ENCODE measurements at regions of chr17 and their contacts with region 1.

Region 1: GRCh38 chr17:39794249-39794970 is 56.7 kb downstream of the GRB7 start:
- DNase-seq: peak in 10 of 14 experiments; percentile 19 to 80 (median 36)
- ATAC-seq: peak; percentile 74
- H3K4me3 ChIP-seq: no peak overlapping the region
- H3K4me3 Mint-ChIP-seq: peak overlapping the region; percentile 79
- H3K27ac ChIP-seq: peak overlapping the region; percentile 53 to 79
- H3K27ac Mint-ChIP-seq: peak overlapping the region; percentile 84
- H3K4me1 ChIP-seq: peaks cover 65% of the 10 kb centered on the region
- H3K4me1 Mint-ChIP-seq: peaks cover 75% of the 10 kb centered on the region
- H3K27me3 ChIP-seq: no peaks in the 10 kb centered on the region
- H3K27me3 Mint-ChIP-seq: no peaks in the 10 kb centered on the region
- CTCF ChIP-seq: no peak

Region 2: DNA sequence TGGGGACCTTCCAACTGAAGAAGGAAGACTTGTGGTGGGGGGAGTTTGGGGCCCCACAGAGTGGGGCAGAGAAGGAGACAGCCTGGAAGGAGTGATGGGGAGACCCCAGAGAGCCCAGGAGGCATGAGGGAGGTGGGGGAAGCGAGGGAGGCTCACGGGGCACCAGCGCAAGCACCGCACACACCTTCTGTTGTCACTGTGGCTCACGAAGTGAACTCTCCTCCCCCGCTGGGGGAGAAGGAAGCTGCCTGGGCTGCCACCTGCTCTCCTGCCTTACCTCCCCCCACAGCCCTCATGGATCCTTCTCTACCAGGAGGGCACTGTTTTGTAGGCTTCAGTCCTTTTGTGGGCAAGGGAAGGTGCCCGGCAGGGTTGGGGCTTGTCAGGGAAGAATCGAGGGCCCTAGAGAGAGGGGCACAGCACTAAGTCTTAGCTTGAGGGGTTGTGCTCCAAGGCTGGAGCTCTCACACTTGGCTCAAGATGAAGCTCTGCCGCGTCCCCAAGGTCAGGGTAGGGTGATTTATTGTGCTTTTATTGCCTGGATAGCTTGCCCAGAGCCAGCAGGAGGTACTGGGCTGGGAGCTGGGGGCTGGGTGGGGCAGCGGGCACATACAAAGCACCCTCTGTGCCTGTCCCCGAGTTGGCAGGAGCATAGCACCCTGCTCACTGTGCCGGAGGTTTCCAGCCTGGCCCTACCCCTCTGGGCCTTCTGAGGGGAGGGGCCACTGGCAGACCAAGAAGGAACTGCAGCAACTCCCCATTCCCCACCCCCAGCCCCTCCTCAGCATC is 162.1 kb before region 1 on chr17:
- CTCF ChIA-PET with region 1: no interaction called
- POLR2A ChIA-PET with region 1: no interaction called
- intact Hi-C with region 1: no loop called
- DNase-seq: no peak
- ATAC-seq: no peak
- H3K4me3 ChIP-seq: no peak overlapping the region
- H3K4me3 Mint-ChIP-seq: no peak overlapping the region
- H3K27ac ChIP-seq: no peak overlapping the region
- H3K27ac Mint-ChIP-seq: no peak overlapping the region
- H3K4me1 ChIP-seq: peaks cover 36% of the 10 kb centered on the region
- H3K4me1 Mint-ChIP-seq: peaks cover 36% of the 10 kb centered on the region
- H3K27me3 ChIP-seq: peaks cover 9 to 21% of the 10 kb centered on the region in 2 experiments
- H3K27me3 Mint-ChIP-seq: peaks cover 24% of the 10 kb centered on the region
- CTCF ChIP-seq: no peak

Region 3: GRCh38 chr17:39730095-39730921 is 64.1 kb before region 1 on chr17 and contains the start of gene MIEN1:
- CTCF ChIA-PET with region 1: interaction called, 11 read pairs
- POLR2A ChIA-PET with region 1: interaction called, 4 read pairs
- intact Hi-C with region 1: no loop called
- DNase-seq: peak; percentile 86 to 98 (median 94)
- ATAC-seq: peak; percentile 91
- H3K4me3 ChIP-seq: peak within 1 kb of the TSS; percentile 79
- H3K4me3 Mint-ChIP-seq: peak within 1 kb of the TSS; percentile 91
- H3K27ac ChIP-seq: peak within 1 kb of the TSS; percentile 90 to 91
- H3K27ac Mint-ChIP-seq: peak within 1 kb of the TSS; percentile 88
- H3K4me1 ChIP-seq: peaks cover 23% of the 10 kb centered on the region
- H3K4me1 Mint-ChIP-seq: peaks cover 17% of the 10 kb centered on the region
- H3K27me3 ChIP-seq: no peaks in the 10 kb centered on the region
- H3K27me3 Mint-ChIP-seq: no peaks in the 10 kb centered on the region
- CTCF ChIP-seq: peak; percentile 91
- total RNA-seq, gene MIEN1: 31.5 to 32.3 TPM

Region 4: DNA sequence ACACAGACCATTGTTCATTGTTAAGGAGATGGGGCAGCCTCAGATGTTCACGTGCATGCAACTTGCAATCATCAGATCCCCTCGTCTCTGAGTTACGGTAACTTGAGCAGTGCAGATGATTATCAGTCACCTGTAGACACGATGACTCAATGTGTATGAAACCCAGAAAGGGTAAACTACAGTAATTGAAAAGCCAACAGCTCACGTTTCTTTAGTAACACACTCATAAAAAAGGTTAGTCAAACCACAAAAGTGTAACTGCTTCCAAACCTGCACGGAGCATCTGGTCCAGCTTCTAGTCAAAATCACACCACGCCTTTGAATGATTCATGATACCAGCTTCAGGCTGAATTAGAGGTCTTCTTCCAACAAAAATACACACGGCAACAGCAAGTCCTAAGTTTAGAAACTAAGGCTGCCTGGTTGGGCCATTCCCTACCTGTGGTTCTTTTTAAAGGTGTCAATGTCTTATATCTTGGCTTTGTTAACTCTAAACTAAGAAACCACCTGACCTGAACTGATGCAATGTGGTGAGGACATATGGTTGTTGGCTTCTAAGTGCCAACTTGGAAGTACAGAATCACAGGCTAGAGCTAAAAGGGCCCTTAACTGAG is 24.3 kb before region 1 on chr17:
- CTCF ChIA-PET with region 1: interaction called, 3 read pairs
- POLR2A ChIA-PET with region 1: interaction called, 32 read pairs
- intact Hi-C with region 1: loop called in 1 of 2 experiments (anchors 2 kb)
- DNase-seq: peak; percentile 23 to 87 (median 55)
- ATAC-seq: peak; percentile 83
- H3K4me3 ChIP-seq: peak overlapping the region; percentile 6
- H3K4me3 Mint-ChIP-seq: peak overlapping the region; percentile 8
- H3K27ac ChIP-seq: peak overlapping the region; percentile 66 to 87
- H3K27ac Mint-ChIP-seq: peak overlapping the region; percentile 84
- H3K4me1 ChIP-seq: peaks cover 82% of the 10 kb centered on the region
- H3K4me1 Mint-ChIP-seq: peaks cover 100% of the 10 kb centered on the region
- H3K27me3 ChIP-seq: no peaks in the 10 kb centered on the region
- H3K27me3 Mint-ChIP-seq: no peaks in the 10 kb centered on the region
- CTCF ChIP-seq: no peak

Region 5: GRCh38 chr17:39777534-39778365 is 16.7 kb before region 1 on chr17:
- CTCF ChIA-PET with region 1: interaction called, 4 read pairs
- POLR2A ChIA-PET with region 1: interaction called, 38 read pairs
- intact Hi-C with region 1: loop called in 1 of 2 experiments (anchors 2 kb)
- DNase-seq: peak in 4 of 14 experiments; percentile 42 to 67 (median 66)
- ATAC-seq: peak; percentile 58
- H3K4me3 ChIP-seq: peak overlapping the region; percentile 64
- H3K4me3 Mint-ChIP-seq: peak overlapping the region; percentile 91
- H3K27ac ChIP-seq: peak overlapping the region; percentile 74 to 78
- H3K27ac Mint-ChIP-seq: peak overlapping the region; percentile 84
- H3K4me1 ChIP-seq: peaks cover 62% of the 10 kb centered on the region
- H3K4me1 Mint-ChIP-seq: peaks cover 89% of the 10 kb centered on the region
- H3K27me3 ChIP-seq: no peaks in the 10 kb centered on the region
- H3K27me3 Mint-ChIP-seq: no peaks in the 10 kb centered on the region
- CTCF ChIP-seq: no peak

Region 6: DNA sequence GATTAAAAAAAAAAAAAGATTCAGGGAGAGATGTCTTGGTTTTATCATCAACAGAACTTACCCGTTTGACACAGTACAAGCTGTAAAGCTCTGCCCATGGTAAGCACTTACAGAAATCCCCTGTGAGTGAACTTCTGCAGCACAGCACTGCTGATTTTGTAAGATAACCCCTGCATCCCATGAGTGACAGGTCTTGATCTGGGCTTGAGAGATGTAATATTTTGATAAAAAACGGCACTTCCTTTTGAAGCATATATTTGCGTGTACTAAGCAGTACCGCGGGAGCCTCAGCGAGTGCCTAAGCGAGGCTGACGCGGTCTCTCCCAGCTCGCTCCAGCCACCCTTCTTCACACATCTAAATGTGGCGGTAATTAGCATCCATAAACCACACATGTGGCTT is 19.2 kb after region 1 on chr17:
- CTCF ChIA-PET with region 1: interaction called, 4 read pairs
- POLR2A ChIA-PET with region 1: interaction called, 54 read pairs
- intact Hi-C with region 1: loop called in 1 of 2 experiments (anchors 1 kb)
- DNase-seq: peak; percentile 39 to 94 (median 54)
- ATAC-seq: peak; percentile 90
- H3K4me3 ChIP-seq: peak overlapping the region; percentile 15
- H3K4me3 Mint-ChIP-seq: peak overlapping the region; percentile 76
- H3K27ac ChIP-seq: peak overlapping the region; percentile 68 to 79
- H3K27ac Mint-ChIP-seq: peak overlapping the region; percentile 90
- H3K4me1 ChIP-seq: peaks cover 35% of the 10 kb centered on the region
- H3K4me1 Mint-ChIP-seq: peaks cover 84% of the 10 kb centered on the region
- H3K27me3 ChIP-seq: no peaks in the 10 kb centered on the region
- H3K27me3 Mint-ChIP-seq: no peaks in the 10 kb centered on the region
- CTCF ChIP-seq: no peak

Region 7: GRCh38 chr17:39822051-39822451 is 27.6 kb after region 1 on chr17:
- CTCF ChIA-PET with region 1: interaction called, 4 read pairs
- POLR2A ChIA-PET with region 1: interaction called, 54 read pairs
- intact Hi-C with region 1: no loop called
- DNase-seq: peak in 2 of 14 experiments; percentile 33 to 55
- ATAC-seq: no peak
- H3K4me3 ChIP-seq: no peak overlapping the region
- H3K4me3 Mint-ChIP-seq: no peak overlapping the region
- H3K27ac ChIP-seq: peak overlapping the region in 1 of 2 donors; percentile 26
- H3K27ac Mint-ChIP-seq: peak overlapping the region; percentile 94
- H3K4me1 ChIP-seq: peaks cover 35% of the 10 kb centered on the region
- H3K4me1 Mint-ChIP-seq: peaks cover 58% of the 10 kb centered on the region
- H3K27me3 ChIP-seq: no peaks in the 10 kb centered on the region
- H3K27me3 Mint-ChIP-seq: no peaks in the 10 kb centered on the region
- CTCF ChIP-seq: no peak

Measured in CD4-positive, alpha-beta T cell (primary cell).